Caco-2 (cell line): ENCODE measurements at regions of chr4 and their contacts with region 1.

Region 1: GRCh38 chr4:81405894-81406401 is 65.8 kb downstream of the RASGEF1B start:
- DNase-seq: peak; percentile 46 to 66
- H3K4me3 ChIP-seq: no peak overlapping the region
- H3K4me3 Mint-ChIP-seq: no peak overlapping the region
- H3K27ac Mint-ChIP-seq: no peak overlapping the region
- H3K4me1 ChIP-seq: no peaks in the 10 kb centered on the region
- H3K4me1 Mint-ChIP-seq: peaks cover 7% of the 10 kb centered on the region
- H3K27me3 ChIP-seq: no peaks in the 10 kb centered on the region
- H3K27me3 Mint-ChIP-seq: peaks cover 4% of the 10 kb centered on the region
- CTCF ChIP-seq: peak; percentile 51 to 85

Region 2: DNA sequence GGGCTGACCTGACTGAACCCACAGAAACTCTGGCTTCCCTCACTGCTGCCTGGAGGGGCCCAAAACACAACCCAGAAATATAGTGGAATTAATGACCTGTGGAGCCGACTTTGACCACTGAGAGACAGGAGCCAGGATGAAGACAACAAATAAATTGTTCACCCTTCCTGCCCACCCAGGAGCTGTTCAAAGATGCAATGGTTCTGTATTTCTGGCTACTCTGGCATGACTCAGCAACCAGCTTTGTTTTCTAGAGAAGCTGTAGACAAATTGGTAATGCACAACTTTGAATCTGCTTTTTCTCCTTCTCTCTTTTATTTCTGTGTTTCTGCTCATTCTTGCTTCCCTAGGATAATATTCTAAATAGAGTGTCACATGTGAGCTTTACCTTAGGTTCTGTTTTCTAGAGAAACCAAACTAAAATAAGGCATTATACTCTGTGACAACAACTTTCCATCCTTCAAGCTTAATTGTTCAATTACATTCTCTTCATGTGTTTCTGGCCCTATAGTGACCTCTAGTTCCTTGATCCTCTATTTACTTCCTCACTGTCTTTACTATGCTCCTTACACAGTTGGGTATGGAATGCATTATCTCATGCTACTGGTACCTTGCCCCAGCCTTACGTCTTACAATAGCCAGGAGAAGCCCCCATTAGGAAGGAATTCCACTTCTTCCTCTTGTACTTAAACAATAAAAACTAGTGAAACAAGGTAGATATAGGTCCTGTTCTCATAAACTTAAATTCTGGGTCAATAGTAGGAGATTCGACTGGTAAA is 184.5 kb before region 1 on chr4:
- CTCF ChIA-PET with region 1: no interaction called
- POLR2A ChIA-PET with region 1: no interaction called
- intact Hi-C with region 1: no loop called
- DNase-seq: no peak
- H3K4me3 ChIP-seq: no peak overlapping the region
- H3K4me3 Mint-ChIP-seq: no peak overlapping the region
- H3K27ac Mint-ChIP-seq: no peak overlapping the region
- H3K4me1 ChIP-seq: no peaks in the 10 kb centered on the region
- H3K4me1 Mint-ChIP-seq: no peaks in the 10 kb centered on the region
- H3K27me3 ChIP-seq: no peaks in the 10 kb centered on the region
- H3K27me3 Mint-ChIP-seq: no peaks in the 10 kb centered on the region
- CTCF ChIP-seq: no peak

Region 3: DNA sequence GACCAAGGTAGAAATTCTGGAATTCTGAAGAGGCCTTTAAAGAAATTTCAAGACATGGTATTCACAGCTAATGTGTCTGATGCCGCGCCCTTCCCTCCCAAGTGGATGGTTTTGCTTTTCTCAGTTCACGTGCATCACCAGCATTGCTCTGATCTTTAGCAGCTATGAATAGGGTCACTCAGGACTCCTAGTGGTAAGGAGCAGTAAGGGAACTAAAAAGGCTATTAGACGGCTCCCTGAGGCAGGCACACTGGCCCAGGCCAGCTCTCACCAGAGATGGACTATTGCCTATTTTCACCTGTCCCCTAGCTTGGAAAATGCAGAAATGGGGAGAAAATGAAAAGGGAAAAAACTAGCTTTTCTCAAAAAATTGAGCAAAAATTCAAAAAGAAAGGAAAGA is 513.3 kb after region 1 on chr4:
- CTCF ChIA-PET with region 1: interaction called, 4 read pairs
- POLR2A ChIA-PET with region 1: no interaction called
- intact Hi-C with region 1: loop called (anchors 1 kb)
- DNase-seq: peak; percentile 46 to 49
- H3K4me3 ChIP-seq: no peak overlapping the region
- H3K4me3 Mint-ChIP-seq: no peak overlapping the region
- H3K27ac Mint-ChIP-seq: no peak overlapping the region
- H3K4me1 ChIP-seq: peaks cover 5% of the 10 kb centered on the region; the same call in 1 of the 2 replicates
- H3K4me1 Mint-ChIP-seq: peaks cover 13% of the 10 kb centered on the region
- H3K27me3 ChIP-seq: no peaks in the 10 kb centered on the region
- H3K27me3 Mint-ChIP-seq: no peaks in the 10 kb centered on the region
- CTCF ChIP-seq: peak in 1 of 2 experiments; percentile 63

Region 4: GRCh38 chr4:82044142-82044993 is 638.4 kb after region 1 on chr4:
- CTCF ChIA-PET with region 1: no interaction called
- POLR2A ChIA-PET with region 1: no interaction called
- intact Hi-C with region 1: loop called (anchors 2 kb)
- DNase-seq: peak; percentile 79 to 80
- H3K4me3 ChIP-seq: peak overlapping the region; percentile 63
- H3K4me3 Mint-ChIP-seq: peak overlapping the region; percentile 93
- H3K27ac Mint-ChIP-seq: no peak overlapping the region
- H3K4me1 ChIP-seq: peaks cover 19% of the 10 kb centered on the region
- H3K4me1 Mint-ChIP-seq: peaks cover 7% of the 10 kb centered on the region
- H3K27me3 ChIP-seq: no peaks in the 10 kb centered on the region
- H3K27me3 Mint-ChIP-seq: no peaks in the 10 kb centered on the region
- CTCF ChIP-seq: no peak

Region 5: DNA sequence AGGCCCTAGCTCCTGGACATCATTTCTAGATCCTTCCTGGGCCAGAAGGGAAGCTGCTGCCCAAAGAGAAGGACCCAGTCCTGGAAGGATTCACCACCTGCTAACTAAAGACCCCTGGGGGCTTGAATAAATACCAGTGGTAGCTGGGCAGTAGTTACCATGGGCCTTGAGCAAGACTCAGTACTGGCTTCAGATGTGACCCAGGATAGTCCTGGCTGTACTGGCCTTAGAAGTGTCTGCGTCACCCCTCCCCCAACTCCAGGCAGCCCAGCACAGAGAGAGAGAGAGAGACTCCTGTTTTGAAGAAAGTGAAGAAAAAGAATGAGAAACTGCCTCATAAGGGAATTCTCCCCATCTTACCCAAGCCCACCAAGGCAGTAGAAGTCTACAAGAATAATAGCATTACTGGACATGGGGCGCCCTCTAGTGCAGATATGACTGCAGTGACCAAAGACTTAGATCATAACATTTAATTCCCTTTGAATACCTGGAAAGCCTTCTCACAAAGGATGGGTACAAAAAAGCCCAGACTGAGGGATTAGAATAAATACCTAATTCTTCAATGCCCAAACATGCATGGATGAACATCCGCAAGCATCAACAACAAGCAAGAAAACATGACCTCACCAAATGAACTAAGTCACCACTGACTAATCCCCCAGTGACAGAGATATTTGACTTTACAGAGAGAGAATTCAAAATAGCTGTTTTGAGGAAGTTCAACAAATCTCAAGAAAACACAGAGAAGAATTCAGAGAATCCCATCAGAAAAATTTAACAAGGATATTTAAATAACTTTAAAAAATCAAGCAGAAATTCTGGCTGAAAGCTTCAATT is 796.1 kb after region 1 on chr4:
- CTCF ChIA-PET with region 1: no interaction called
- POLR2A ChIA-PET with region 1: no interaction called
- intact Hi-C with region 1: loop called (anchors 1 kb)
- DNase-seq: peak; percentile 57 to 63
- H3K4me3 ChIP-seq: no peak overlapping the region
- H3K4me3 Mint-ChIP-seq: no peak overlapping the region
- H3K27ac Mint-ChIP-seq: peak overlapping the region; percentile 51
- H3K4me1 ChIP-seq: no peaks in the 10 kb centered on the region
- H3K4me1 Mint-ChIP-seq: no peaks in the 10 kb centered on the region
- H3K27me3 ChIP-seq: no peaks in the 10 kb centered on the region
- H3K27me3 Mint-ChIP-seq: peaks cover 4% of the 10 kb centered on the region
- CTCF ChIP-seq: peak; percentile 57 to 84

Region 6: DNA sequence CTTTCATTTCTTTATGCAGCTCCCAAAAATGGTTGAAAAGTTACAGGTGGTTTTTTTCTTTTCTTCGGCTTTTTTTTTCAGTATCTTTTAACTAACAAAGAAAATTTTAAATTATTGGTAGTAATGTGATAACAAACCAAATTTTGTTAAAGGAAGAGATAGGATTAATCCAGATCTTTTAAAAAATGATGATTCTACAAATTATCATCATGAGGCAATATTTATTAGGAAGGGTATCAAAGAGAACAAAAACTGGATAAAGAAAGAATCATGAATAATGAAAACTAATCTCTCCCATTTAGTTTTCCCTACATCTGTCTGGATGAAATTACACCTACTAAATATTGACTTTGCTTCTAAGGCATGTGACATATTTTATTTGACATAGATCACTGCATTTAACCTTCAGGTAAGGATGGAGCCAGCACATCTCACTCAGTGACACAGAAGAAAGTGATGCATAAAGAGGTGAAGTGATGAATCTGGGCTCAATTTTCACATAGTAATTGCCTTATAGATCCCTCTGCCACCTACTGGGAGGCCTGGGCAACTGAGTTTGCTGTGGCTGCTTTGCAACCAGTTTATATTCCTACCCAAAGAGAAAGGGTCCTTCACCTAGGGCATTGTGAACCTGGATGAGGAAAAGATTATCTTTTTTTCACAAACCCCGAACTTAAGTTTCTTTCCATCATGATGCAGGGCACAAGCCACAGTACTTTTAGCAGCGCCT is 812.2 kb after region 1 on chr4:
- CTCF ChIA-PET with region 1: no interaction called
- POLR2A ChIA-PET with region 1: no interaction called
- intact Hi-C with region 1: loop called (anchors 1 kb)
- DNase-seq: peak in 1 of 2 experiments; percentile 29
- H3K4me3 ChIP-seq: no peak overlapping the region
- H3K4me3 Mint-ChIP-seq: no peak overlapping the region
- H3K27ac Mint-ChIP-seq: no peak overlapping the region
- H3K4me1 ChIP-seq: no peaks in the 10 kb centered on the region
- H3K4me1 Mint-ChIP-seq: no peaks in the 10 kb centered on the region
- H3K27me3 ChIP-seq: no peaks in the 10 kb centered on the region
- H3K27me3 Mint-ChIP-seq: no peaks in the 10 kb centered on the region
- CTCF ChIP-seq: peak; percentile 22 to 51

Region 7: DNA sequence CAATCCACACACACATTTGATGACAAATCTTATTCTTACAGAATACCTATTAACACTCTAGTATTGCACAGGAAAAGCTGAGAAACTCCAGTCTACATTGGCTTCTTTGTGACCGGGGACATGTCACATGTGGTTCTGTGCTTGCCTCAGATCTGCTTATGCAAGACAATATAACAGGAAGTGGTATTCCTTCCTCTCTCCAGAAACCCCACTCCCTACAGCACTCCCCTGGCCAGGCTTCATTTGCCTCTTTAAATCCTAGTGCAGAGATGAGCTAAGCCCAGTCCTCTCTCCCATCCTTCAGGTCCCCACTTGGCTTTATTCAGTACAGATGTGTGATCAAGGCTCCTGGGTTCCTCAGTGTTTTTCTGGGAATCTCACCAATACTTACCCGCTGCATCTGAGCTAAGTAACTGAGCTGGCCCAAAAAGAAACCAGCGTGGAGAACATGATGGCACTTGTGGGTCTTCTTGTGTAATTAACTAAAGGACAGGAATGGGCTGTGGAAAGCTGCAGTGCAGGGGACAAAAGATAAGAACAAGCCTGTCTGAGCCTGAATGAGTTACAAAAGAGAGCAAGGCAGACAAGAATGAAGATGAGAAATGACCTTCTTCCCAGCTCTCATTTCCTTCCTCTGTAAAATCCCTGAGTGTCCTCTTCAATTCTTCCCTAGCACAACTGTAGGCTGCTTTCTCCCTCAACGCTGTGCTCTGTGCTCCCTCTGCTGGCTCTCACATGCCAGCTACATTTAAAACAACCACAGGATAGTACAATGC is 862.3 kb after region 1 on chr4:
- CTCF ChIA-PET with region 1: no interaction called
- POLR2A ChIA-PET with region 1: no interaction called
- intact Hi-C with region 1: loop called (anchors 1 kb)
- DNase-seq: peak; percentile 50 to 55
- H3K4me3 ChIP-seq: no peak overlapping the region
- H3K4me3 Mint-ChIP-seq: no peak overlapping the region
- H3K27ac Mint-ChIP-seq: no peak overlapping the region
- H3K4me1 ChIP-seq: peaks cover 18% of the 10 kb centered on the region
- H3K4me1 Mint-ChIP-seq: peaks cover 9% of the 10 kb centered on the region
- H3K27me3 ChIP-seq: no peaks in the 10 kb centered on the region
- H3K27me3 Mint-ChIP-seq: no peaks in the 10 kb centered on the region
- CTCF ChIP-seq: peak; percentile 58 to 85

Region 8: GRCh38 chr4:82284858-82285805 is 879.2 kb after region 1 on chr4:
- CTCF ChIA-PET with region 1: no interaction called
- POLR2A ChIA-PET with region 1: no interaction called
- intact Hi-C with region 1: loop called (anchors 1 kb)
- DNase-seq: peak; percentile 100
- H3K4me3 ChIP-seq: peak overlapping the region; percentile 47
- H3K4me3 Mint-ChIP-seq: peak overlapping the region; percentile 66
- H3K27ac Mint-ChIP-seq: no peak overlapping the region
- H3K4me1 ChIP-seq: peaks cover 12% of the 10 kb centered on the region
- H3K4me1 Mint-ChIP-seq: peaks cover 19% of the 10 kb centered on the region
- H3K27me3 ChIP-seq: no peaks in the 10 kb centered on the region
- H3K27me3 Mint-ChIP-seq: no peaks in the 10 kb centered on the region
- CTCF ChIP-seq: peak; percentile 81 to 95